ENCODE measurements at regions of chr1 and their contacts with region 1.

Region 1: DNA sequence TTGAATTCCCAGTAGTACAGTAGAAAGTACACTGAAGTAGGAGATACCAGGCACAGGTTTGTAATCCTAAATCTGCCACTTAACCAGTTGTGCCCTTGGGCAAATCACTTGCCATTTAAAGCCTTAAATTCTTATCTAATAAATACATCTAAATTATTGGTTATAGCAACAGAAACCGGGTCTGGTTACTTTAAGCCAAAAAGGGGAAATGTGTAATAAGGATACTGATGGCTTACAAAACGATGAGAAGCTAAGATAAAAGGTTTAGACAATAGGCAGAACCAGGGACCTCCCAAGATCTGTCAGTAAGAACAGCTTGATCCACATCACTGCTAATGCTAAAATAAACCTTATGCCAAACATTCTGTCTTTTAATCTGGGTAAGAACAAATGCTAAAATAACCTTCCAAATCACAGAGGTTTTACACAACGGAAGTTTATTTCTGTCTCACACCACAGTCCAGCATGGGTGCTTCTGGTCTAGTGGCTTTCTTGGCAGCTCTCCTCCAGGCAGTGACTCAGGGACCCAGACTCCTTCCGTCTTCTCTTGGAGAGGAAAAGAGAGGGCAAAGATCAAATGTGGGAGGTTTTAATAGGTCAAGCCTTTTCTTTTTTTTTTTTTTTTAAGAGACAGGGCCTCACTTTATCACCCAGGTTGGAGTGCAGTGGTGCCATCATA is 16.5 kb upstream of the ZMYM1 start:
- DNase-seq: no peak
- H3K4me3 ChIP-seq: no peak overlapping the region
- H3K27ac ChIP-seq: no peak overlapping the region
- H3K4me1 ChIP-seq: no peaks in the 10 kb centered on the region
- H3K27me3 ChIP-seq: no peaks in the 10 kb centered on the region
- CTCF ChIP-seq: no peak

Region 2: GRCh38 chr1:35080171-35080854 is 17.7 kb after region 1 on chr1:
- CTCF ChIA-PET with region 1: interaction called, 13 read pairs
- POLR2A ChIA-PET with region 1: no interaction called
- intact Hi-C with region 1: no loop called
- DNase-seq: no peak
- H3K4me3 ChIP-seq: peak overlapping the region; percentile 59
- H3K27ac ChIP-seq: peak overlapping the region; percentile 72
- H3K4me1 ChIP-seq: peaks cover 14% of the 10 kb centered on the region
- H3K27me3 ChIP-seq: no peaks in the 10 kb centered on the region
- CTCF ChIP-seq: no peak

Measured in A673 (cell line).